CD8-positive, alpha-beta T cell (primary cell): ENCODE measurements at regions of chr1 and their contacts with region 1.

Region 1: DNA sequence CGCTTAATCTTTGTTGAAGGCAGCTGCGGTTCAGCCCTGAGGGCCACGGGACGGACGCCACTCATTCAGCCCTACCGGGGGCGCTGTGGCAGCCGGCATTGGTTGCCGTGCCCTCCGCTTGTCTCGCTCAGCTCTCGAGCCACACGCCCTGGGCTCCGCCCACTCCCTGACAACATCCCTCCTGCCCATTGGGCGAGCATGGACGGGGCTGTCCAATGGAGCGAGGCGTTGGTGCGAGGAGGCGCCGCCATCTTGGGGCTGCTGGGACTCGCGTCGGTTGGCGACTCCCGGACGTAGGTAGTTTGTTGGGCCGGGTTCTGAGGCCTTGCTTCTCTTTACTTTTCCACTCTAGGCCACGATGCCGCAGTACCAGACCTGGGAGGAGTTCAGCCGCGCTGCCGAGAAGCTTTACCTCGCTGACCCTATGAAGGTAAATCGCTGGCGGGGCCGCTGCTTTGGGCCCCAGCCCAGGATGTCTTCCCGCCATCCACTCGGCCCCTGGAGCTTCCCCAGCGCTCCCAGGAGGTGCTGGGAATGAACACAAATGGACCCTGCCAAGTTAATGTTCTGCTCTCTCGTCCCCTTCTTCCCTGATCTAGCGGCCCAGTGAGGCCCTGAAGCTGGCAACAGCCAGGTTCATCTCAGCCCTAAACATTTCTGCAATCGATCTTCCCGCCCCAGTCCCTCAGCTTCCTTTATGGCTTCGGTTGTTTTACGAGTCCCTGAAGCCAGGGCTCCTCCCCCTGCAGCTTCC is at the start of gene SRP9:
- DNase-seq: peak; percentile 98 to 100 (median 99)
- ATAC-seq: peak; percentile 93
- H3K4me3 ChIP-seq: peak within 1 kb of the TSS; percentile 63 to 76
- H3K4me3 Mint-ChIP-seq: no peak within 1 kb of the TSS
- H3K27ac ChIP-seq: peak within 1 kb of the TSS; percentile 90 to 96
- H3K27ac Mint-ChIP-seq: no peak within 1 kb of the TSS
- H3K4me1 ChIP-seq: peaks cover 57% of the 10 kb centered on the region
- H3K4me1 Mint-ChIP-seq: peaks cover 46% of the 10 kb centered on the region
- H3K27me3 ChIP-seq: no peaks in the 10 kb centered on the region
- H3K27me3 Mint-ChIP-seq: no peaks in the 10 kb centered on the region
- CTCF ChIP-seq: peak; percentile 70
- total RNA-seq, gene SRP9: 55.2 to 57.7 TPM

Region 2: GRCh38 chr1:225441314-225442122 is 336.2 kb before region 1 on chr1:
- CTCF ChIA-PET with region 1: no interaction called
- POLR2A ChIA-PET with region 1: interaction called, 10 read pairs
- intact Hi-C with region 1: no loop called
- DNase-seq: no peak
- ATAC-seq: no peak
- H3K4me3 ChIP-seq: peak overlapping the region in 1 of 2 experiments; percentile 14
- H3K4me3 Mint-ChIP-seq: peak overlapping the region; percentile 61
- H3K27ac ChIP-seq: peak overlapping the region in 1 of 2 experiments; percentile 51
- H3K27ac Mint-ChIP-seq: peak overlapping the region; percentile 79
- H3K4me1 ChIP-seq: peaks cover 51% of the 10 kb centered on the region
- H3K4me1 Mint-ChIP-seq: peaks cover 53% of the 10 kb centered on the region
- H3K27me3 ChIP-seq: no peaks in the 10 kb centered on the region
- H3K27me3 Mint-ChIP-seq: no peaks in the 10 kb centered on the region
- CTCF ChIP-seq: no peak

Region 3: DNA sequence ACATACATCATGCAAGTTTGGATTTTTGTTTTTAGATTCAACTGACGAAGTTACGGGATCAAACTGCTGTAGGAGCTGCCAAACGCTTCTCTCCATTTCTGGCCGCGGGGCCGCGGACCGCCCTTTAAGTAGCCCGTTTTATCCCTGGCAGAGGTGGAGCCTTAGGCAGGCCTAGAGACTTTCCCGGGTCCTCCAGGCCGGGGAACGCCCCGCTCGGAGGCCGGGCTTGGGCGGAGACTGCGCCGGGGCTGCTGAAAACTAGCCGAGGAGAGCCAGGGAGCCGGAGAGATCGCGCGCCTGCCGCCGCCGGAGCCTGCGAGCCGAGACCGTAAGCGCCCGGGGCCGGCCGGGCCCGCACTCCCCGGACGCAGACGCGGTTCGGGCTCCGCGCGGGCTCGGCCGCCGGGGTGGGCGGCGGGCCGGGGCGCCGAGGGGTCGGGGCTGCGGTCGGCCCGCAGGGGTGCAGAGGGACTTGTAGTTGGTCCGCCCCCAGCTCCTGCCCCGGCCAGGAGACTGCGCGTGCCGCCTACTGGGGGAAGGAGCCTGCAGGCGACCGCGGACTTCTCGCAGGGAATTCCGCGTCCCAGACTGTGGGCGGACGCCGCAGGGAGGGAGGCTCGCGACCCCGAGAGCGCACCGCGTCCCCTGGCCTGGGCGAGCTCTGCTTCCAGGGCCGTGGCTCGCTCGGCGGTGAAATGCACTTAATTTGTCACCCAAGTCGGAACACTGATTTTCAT is 32.2 kb after region 1 on chr1 and contains the start of gene EPHX1:
- CTCF ChIA-PET with region 1: interaction called, 7 read pairs
- POLR2A ChIA-PET with region 1: interaction called, 20 read pairs
- intact Hi-C with region 1: loop called in 1 of 2 experiments (anchors 2 kb)
- DNase-seq: peak; percentile 18 to 80 (median 62)
- ATAC-seq: peak; percentile 81
- H3K4me3 ChIP-seq: peak within 1 kb of the TSS; percentile 39 to 52
- H3K4me3 Mint-ChIP-seq: peak within 1 kb of the TSS; percentile 83
- H3K27ac ChIP-seq: no peak within 1 kb of the TSS
- H3K27ac Mint-ChIP-seq: peak within 1 kb of the TSS; percentile 70
- H3K4me1 ChIP-seq: peaks cover 5% of the 10 kb centered on the region
- H3K4me1 Mint-ChIP-seq: peaks cover 11% of the 10 kb centered on the region
- H3K27me3 ChIP-seq: no peaks in the 10 kb centered on the region
- H3K27me3 Mint-ChIP-seq: no peaks in the 10 kb centered on the region
- CTCF ChIP-seq: no peak
- total RNA-seq, gene EPHX1: 0.72 to 0.92 TPM

Region 4: DNA sequence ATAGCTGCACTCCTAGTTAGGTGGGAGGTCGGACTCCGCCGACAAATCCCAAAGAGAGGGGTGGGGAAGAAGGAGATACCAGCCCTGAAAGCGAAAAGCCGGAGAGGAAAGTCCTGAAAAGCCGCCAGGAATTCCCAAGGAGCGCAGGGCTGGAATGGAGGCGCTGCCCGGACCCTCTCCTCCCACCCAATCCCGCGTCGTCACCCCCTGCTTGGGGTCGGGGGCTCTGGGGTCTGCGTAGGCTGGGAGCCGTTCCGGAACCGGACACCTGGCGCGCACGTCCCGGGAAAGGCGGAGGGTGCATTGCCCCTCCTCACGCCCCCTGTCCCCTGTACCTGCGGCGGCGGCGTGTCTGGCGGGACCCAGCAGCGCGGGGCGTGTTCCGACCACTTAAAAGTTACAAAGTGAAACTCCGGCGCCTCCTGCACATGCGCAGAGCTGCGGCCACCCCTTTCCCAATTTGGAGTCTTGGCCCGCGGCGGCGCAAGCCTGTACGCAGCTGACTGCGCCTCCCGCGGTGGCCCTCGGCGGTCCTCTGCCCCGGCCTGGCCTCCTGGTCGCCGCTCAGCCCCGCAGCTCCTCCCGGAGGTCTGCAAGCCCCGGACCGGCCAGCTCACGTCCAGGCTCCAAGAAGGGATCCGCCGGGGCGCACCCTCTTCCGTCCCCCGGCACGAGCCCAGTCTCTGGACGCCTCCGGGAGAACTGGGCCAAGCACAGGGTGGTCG is 104.4 kb after region 1 on chr1 and contains the start of gene TMEM63A:
- CTCF ChIA-PET with region 1: interaction called, 10 read pairs
- POLR2A ChIA-PET with region 1: interaction called, 44 read pairs
- intact Hi-C with region 1: loop called in 1 of 2 experiments (anchors 1 kb)
- DNase-seq: peak; percentile 78 to 95 (median 92)
- ATAC-seq: peak; percentile 72
- H3K4me3 ChIP-seq: peak within 1 kb of the TSS; percentile 85 to 100
- H3K4me3 Mint-ChIP-seq: peak within 1 kb of the TSS; percentile 94
- H3K27ac ChIP-seq: peak within 1 kb of the TSS; percentile 65 to 84
- H3K27ac Mint-ChIP-seq: peak within 1 kb of the TSS; percentile 97
- H3K4me1 ChIP-seq: peaks cover 42% of the 10 kb centered on the region
- H3K4me1 Mint-ChIP-seq: peaks cover 52% of the 10 kb centered on the region
- H3K27me3 ChIP-seq: no peaks in the 10 kb centered on the region
- H3K27me3 Mint-ChIP-seq: no peaks in the 10 kb centered on the region
- CTCF ChIP-seq: no peak
- total RNA-seq, gene TMEM63A: 132 to 144 TPM

Region 5: GRCh38 chr1:225923692-225924555 is 146.2 kb after region 1 on chr1 and contains the start of gene PYCR2:
- CTCF ChIA-PET with region 1: interaction called, 3 read pairs
- POLR2A ChIA-PET with region 1: interaction called, 15 read pairs
- intact Hi-C with region 1: loop called (anchors 1 kb)
- DNase-seq: peak; percentile 90 to 98 (median 92)
- ATAC-seq: peak; percentile 98
- H3K4me3 ChIP-seq: peak within 1 kb of the TSS; percentile 75 to 79
- H3K4me3 Mint-ChIP-seq: peak within 1 kb of the TSS; percentile 94
- H3K27ac ChIP-seq: peak within 1 kb of the TSS; percentile 75 to 91
- H3K27ac Mint-ChIP-seq: peak within 1 kb of the TSS; percentile 93
- H3K4me1 ChIP-seq: peaks cover 75% of the 10 kb centered on the region
- H3K4me1 Mint-ChIP-seq: peaks cover 63% of the 10 kb centered on the region
- H3K27me3 ChIP-seq: no peaks in the 10 kb centered on the region
- H3K27me3 Mint-ChIP-seq: no peaks in the 10 kb centered on the region
- CTCF ChIP-seq: no peak
- total RNA-seq, gene PYCR2: 27.3 to 30.6 TPM

Region 6: GRCh38 chr1:225934711-225935110 is 157.0 kb after region 1 on chr1:
- CTCF ChIA-PET with region 1: no interaction called
- POLR2A ChIA-PET with region 1: no interaction called
- intact Hi-C with region 1: no loop called
- DNase-seq: no peak
- ATAC-seq: no peak
- H3K4me3 ChIP-seq: no peak overlapping the region
- H3K4me3 Mint-ChIP-seq: no peak overlapping the region
- H3K27ac ChIP-seq: no peak overlapping the region
- H3K27ac Mint-ChIP-seq: no peak overlapping the region
- H3K4me1 ChIP-seq: peaks cover 4% of the 10 kb centered on the region
- H3K4me1 Mint-ChIP-seq: peaks cover 2% of the 10 kb centered on the region
- H3K27me3 ChIP-seq: no peaks in the 10 kb centered on the region
- H3K27me3 Mint-ChIP-seq: no peaks in the 10 kb centered on the region
- CTCF ChIP-seq: no peak

Region 7: GRCh38 chr1:226062558-226063223 is 284.9 kb after region 1 on chr1 and contains the start of gene H3-3A:
- CTCF ChIA-PET with region 1: no interaction called
- POLR2A ChIA-PET with region 1: interaction called, 15 read pairs
- intact Hi-C with region 1: loop called in 1 of 2 experiments (anchors 5 kb)
- DNase-seq: peak; percentile 96 to 99 (median 98)
- ATAC-seq: peak; percentile 85
- H3K4me3 ChIP-seq: peak within 1 kb of the TSS; percentile 84 to 92
- H3K4me3 Mint-ChIP-seq: peak within 1 kb of the TSS; percentile 100
- H3K27ac ChIP-seq: peak within 1 kb of the TSS; percentile 90 to 91
- H3K27ac Mint-ChIP-seq: peak within 1 kb of the TSS; percentile 100
- H3K4me1 ChIP-seq: peaks cover 42% of the 10 kb centered on the region
- H3K4me1 Mint-ChIP-seq: peaks cover 49% of the 10 kb centered on the region
- H3K27me3 ChIP-seq: no peaks in the 10 kb centered on the region
- H3K27me3 Mint-ChIP-seq: no peaks in the 10 kb centered on the region
- CTCF ChIP-seq: no peak
- total RNA-seq, gene H3-3A: 439 to 447 TPM

Region 8: GRCh38 chr1:226083302-226084101 is 305.7 kb after region 1 on chr1:
- CTCF ChIA-PET with region 1: no interaction called
- POLR2A ChIA-PET with region 1: no interaction called
- intact Hi-C with region 1: no loop called
- DNase-seq: peak; percentile 80 to 97 (median 93)
- ATAC-seq: peak; percentile 97
- H3K4me3 ChIP-seq: peak overlapping the region; percentile 78 to 79
- H3K4me3 Mint-ChIP-seq: peak overlapping the region; percentile 90
- H3K27ac ChIP-seq: peak overlapping the region in 1 of 2 experiments; percentile 15
- H3K27ac Mint-ChIP-seq: peak overlapping the region; percentile 81
- H3K4me1 ChIP-seq: peaks cover 10% of the 10 kb centered on the region
- H3K4me1 Mint-ChIP-seq: peaks cover 11% of the 10 kb centered on the region
- H3K27me3 ChIP-seq: no peaks in the 10 kb centered on the region
- H3K27me3 Mint-ChIP-seq: no peaks in the 10 kb centered on the region
- CTCF ChIP-seq: no peak